ENCODE measurements at regions of chr19 and their contacts with region 1.

Region 1: DNA sequence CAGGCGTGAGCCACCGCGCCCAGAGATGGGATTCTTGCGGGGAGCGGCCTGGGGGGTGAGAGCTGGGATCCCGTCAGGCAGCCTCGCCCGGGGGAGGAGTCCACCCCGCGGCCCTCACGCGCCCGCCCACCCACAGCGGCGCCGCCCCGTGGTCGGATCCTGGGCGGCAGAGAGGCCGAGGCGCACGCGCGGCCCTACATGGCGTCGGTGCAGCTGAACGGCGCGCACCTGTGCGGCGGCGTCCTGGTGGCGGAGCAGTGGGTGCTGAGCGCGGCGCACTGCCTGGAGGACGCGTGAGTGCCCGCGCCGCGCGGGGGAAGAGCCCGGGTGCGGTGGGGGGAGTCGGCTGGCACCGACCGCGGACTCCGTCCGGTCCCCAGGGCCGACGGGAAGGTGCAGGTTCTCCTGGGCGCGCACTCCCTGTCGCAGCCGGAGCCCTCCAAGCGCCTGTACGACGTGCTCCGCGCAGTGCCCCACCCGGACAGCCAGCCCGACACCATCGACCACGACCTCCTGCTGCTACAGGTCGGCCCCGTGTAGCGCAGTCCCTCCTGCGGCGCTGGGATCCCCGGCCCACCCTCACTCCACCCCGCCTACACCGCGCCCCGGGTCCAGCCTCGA is 1.1 kb downstream of the CFD start:
- DNase-seq: peak; percentile 75
- ATAC-seq: peak; percentile 82
- H3K4me3 ChIP-seq: peak overlapping the region; percentile 59
- H3K27ac ChIP-seq: no peak overlapping the region
- H3K4me1 ChIP-seq: peaks cover 3% of the 10 kb centered on the region; the same call in 1 of the 2 replicates
- H3K27me3 ChIP-seq: no peaks in the 10 kb centered on the region
- CTCF ChIP-seq: peak; percentile 21; the same call in 1 of the 2 replicates
- POLR2A ChIP-seq: no peak
- RAD21 ChIP-seq: no peak

Region 2: GRCh38 chr19:680287-681028 is 180.1 kb before region 1 on chr19:
- CTCF ChIA-PET with region 1: no interaction called
- POLR2A ChIA-PET with region 1: interaction called, 22 read pairs
- dilution Hi-C with region 1: no loop called
- in situ Hi-C with region 1: no loop called
- intact Hi-C with region 1: no loop called
- DNase-seq: peak; percentile 98
- ATAC-seq: peak; percentile 84
- H3K4me3 ChIP-seq: peak overlapping the region; percentile 72
- H3K27ac ChIP-seq: peak overlapping the region; percentile 95
- H3K4me1 ChIP-seq: peaks cover 18% of the 10 kb centered on the region
- H3K27me3 ChIP-seq: no peaks in the 10 kb centered on the region
- CTCF ChIP-seq: peak; percentile 63
- POLR2A ChIP-seq: peak; percentile 94
- RAD21 ChIP-seq: peak; percentile 40

Region 3: GRCh38 chr19:771332-771785 is 89.2 kb before region 1 on chr19:
- CTCF ChIA-PET with region 1: no interaction called
- POLR2A ChIA-PET with region 1: no interaction called
- dilution Hi-C with region 1: no loop called
- in situ Hi-C with region 1: no loop called
- intact Hi-C with region 1: loop called (anchors 5 kb)
- DNase-seq: peak; percentile 43
- ATAC-seq: no peak
- H3K4me3 ChIP-seq: no peak overlapping the region
- H3K27ac ChIP-seq: no peak overlapping the region
- H3K4me1 ChIP-seq: no peaks in the 10 kb centered on the region; the same call in 1 of the 2 replicates
- H3K27me3 ChIP-seq: no peaks in the 10 kb centered on the region
- CTCF ChIP-seq: peak; percentile 57
- POLR2A ChIP-seq: no peak
- RAD21 ChIP-seq: peak; percentile 47

Region 4: GRCh38 chr19:787536-787935 is 73.1 kb before region 1 on chr19:
- CTCF ChIA-PET with region 1: no interaction called
- POLR2A ChIA-PET with region 1: no interaction called
- dilution Hi-C with region 1: no loop called
- in situ Hi-C with region 1: no loop called
- intact Hi-C with region 1: no loop called
- DNase-seq: no peak
- ATAC-seq: no peak
- H3K4me3 ChIP-seq: no peak overlapping the region
- H3K27ac ChIP-seq: no peak overlapping the region
- H3K4me1 ChIP-seq: peaks cover 9% of the 10 kb centered on the region
- H3K27me3 ChIP-seq: no peaks in the 10 kb centered on the region
- CTCF ChIP-seq: no peak
- POLR2A ChIP-seq: no peak
- RAD21 ChIP-seq: no peak

Region 5: GRCh38 chr19:920051-920864 is 59.7 kb after region 1 on chr19:
- CTCF ChIA-PET with region 1: no interaction called
- POLR2A ChIA-PET with region 1: no interaction called
- dilution Hi-C with region 1: no loop called
- in situ Hi-C with region 1: no loop called
- intact Hi-C with region 1: loop called (anchors 2 kb)
- DNase-seq: no peak
- ATAC-seq: 0 out of 2 replicates have a peak, but pooled peaks have one; percentile 1
- H3K4me3 ChIP-seq: no peak overlapping the region
- H3K27ac ChIP-seq: no peak overlapping the region
- H3K4me1 ChIP-seq: peaks cover 6% of the 10 kb centered on the region
- H3K27me3 ChIP-seq: peaks cover 38% of the 10 kb centered on the region
- CTCF ChIP-seq: no peak
- POLR2A ChIP-seq: no peak
- RAD21 ChIP-seq: no peak

Region 6: GRCh38 chr19:996051-996838 is 135.7 kb after region 1 on chr19:
- CTCF ChIA-PET with region 1: no interaction called
- POLR2A ChIA-PET with region 1: no interaction called
- dilution Hi-C with region 1: no loop called
- in situ Hi-C with region 1: loop called (anchors 5 kb)
- intact Hi-C with region 1: no loop called
- DNase-seq: peak; percentile 53
- ATAC-seq: peak; percentile 27
- H3K4me3 ChIP-seq: peak overlapping the region; percentile 9; the same call in 1 of the 2 replicates
- H3K27ac ChIP-seq: no peak overlapping the region
- H3K4me1 ChIP-seq: peaks cover 5% of the 10 kb centered on the region
- H3K27me3 ChIP-seq: peaks cover 42% of the 10 kb centered on the region
- CTCF ChIP-seq: no peak
- POLR2A ChIP-seq: no peak
- RAD21 ChIP-seq: no peak

Region 7: GRCh38 chr19:1009041-1009975 is 148.7 kb after region 1 on chr19:
- CTCF ChIA-PET with region 1: no interaction called
- POLR2A ChIA-PET with region 1: no interaction called
- dilution Hi-C with region 1: no loop called
- in situ Hi-C with region 1: no loop called
- intact Hi-C with region 1: no loop called
- DNase-seq: peak; percentile 83
- ATAC-seq: peak; percentile 91
- H3K4me3 ChIP-seq: no peak overlapping the region
- H3K27ac ChIP-seq: peak overlapping the region; percentile 81
- H3K4me1 ChIP-seq: peaks cover 17% of the 10 kb centered on the region
- H3K27me3 ChIP-seq: no peaks in the 10 kb centered on the region
- CTCF ChIP-seq: 0 out of 2 replicates have a peak, but pooled peaks have one; percentile 3
- POLR2A ChIP-seq: no peak
- RAD21 ChIP-seq: no peak

Region 8: DNA sequence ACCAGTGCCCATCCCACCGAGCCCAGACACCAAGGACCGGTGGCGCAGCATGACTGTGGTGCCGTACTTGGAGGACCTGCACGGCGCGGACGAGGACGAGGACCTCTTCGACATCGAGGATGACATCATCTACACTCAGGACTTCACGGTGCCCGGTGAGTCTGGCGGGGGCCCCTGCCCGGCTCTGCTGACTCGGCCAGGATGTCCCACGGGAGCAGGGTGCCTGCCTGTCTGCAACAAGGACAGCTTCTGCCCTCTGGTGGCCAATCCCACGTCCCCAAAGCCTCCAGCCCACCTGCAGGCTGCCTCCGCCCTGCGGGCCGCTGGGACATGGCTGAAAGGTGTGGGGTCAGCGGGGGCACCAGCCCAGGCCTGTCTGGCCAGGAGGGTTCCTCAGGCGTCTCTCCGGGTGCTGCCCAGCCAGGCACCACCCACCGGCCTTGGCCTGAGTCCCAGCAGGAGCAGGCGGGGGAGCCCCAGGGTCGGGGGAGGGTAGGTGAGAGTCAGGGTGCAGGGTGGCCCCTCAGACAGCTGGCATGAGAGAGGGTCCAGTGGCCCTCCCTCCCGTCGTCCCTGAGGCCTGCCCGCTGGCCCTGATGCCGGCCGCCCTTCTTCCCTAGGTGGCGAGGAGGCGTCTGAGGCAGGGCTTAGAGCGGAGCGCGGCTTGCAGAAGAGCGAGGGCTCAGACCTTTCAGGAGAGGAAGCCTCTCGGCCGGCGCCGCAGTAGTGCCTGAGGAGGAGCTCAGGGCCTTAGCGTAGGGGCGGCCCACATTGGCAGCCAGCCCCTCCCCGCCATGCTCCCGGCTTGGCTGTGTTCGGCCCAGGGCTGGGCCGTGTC is 362.6 kb after region 1 on chr19:
- CTCF ChIA-PET with region 1: no interaction called
- POLR2A ChIA-PET with region 1: no interaction called
- dilution Hi-C with region 1: no loop called
- in situ Hi-C with region 1: no loop called
- intact Hi-C with region 1: no loop called
- DNase-seq: peak; percentile 42
- ATAC-seq: peak; percentile 34; the same call in 1 of the 2 replicates
- H3K4me3 ChIP-seq: no peak overlapping the region
- H3K27ac ChIP-seq: no peak overlapping the region
- H3K4me1 ChIP-seq: no peaks in the 10 kb centered on the region
- H3K27me3 ChIP-seq: no peaks in the 10 kb centered on the region
- CTCF ChIP-seq: peak; percentile 45
- POLR2A ChIP-seq: no peak; the same call in 1 of the 2 replicates
- RAD21 ChIP-seq: peak; percentile 39

Measured in IMR-90 (cell line).